WTC11 (cell line): ENCODE measurements at regions of chr2 and their contacts with region 1.

Region 1: GRCh38 chr2:115874427-115874826 is 1432.0 kb downstream of the DPP10 start:
- DNase-seq: no peak
- ATAC-seq: no peak
- H3K4me3 Mint-ChIP-seq: no peak overlapping the region
- H3K27ac Mint-ChIP-seq: no peak overlapping the region
- H3K4me1 Mint-ChIP-seq: no peaks in the 10 kb centered on the region
- H3K27me3 Mint-ChIP-seq: no peaks in the 10 kb centered on the region; the same call in 1 of the 2 replicates
- CTCF ChIP-seq: no peak

Region 2: DNA sequence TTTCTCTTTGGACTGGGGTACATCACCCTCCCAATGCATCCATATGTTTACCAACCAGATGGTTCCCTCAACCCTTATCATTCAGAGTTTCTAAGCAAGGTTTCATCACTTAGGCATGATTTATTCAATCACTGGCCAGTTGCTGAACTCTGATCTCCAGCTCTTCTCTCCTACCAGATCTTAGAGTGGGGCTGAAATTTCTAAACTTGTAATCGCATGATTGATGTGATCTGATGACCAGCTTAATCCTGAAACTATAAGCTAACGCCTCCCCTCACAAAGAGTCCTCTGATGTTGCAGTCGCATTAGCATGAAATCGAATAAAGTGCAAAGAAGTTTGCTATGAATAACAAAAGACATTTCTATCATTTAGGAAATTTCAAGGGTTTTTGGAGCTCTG is 350.0 kb before region 1 on chr2:
- CTCF ChIA-PET with region 1: no interaction called
- POLR2A ChIA-PET with region 1: no interaction called
- DNase-seq: no peak
- ATAC-seq: no peak
- H3K4me3 Mint-ChIP-seq: no peak overlapping the region
- H3K27ac Mint-ChIP-seq: no peak overlapping the region
- H3K4me1 Mint-ChIP-seq: peaks cover 9% of the 10 kb centered on the region
- H3K27me3 Mint-ChIP-seq: no peaks in the 10 kb centered on the region
- CTCF ChIP-seq: no peak

Region 3: DNA sequence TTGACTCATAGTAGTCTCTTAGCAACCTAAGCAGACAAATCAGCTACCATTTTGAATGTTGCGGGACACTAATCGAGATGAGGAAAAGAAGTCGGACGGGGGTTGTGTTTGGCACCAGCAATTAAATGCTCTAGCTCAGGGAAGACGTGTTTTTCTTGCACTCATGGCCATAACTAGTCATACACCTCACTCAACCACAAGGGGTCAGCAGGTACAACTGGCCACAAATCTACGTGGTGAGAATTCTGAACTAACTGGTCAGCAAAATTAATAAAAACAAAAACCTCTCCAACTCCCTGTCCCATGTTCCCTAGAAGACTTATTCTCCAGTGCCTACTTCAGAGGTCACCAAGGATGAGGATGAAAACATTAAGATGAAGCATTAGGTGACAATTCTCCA is 35.8 kb after region 1 on chr2:
- CTCF ChIA-PET with region 1: no interaction called
- POLR2A ChIA-PET with region 1: interaction called, 11 read pairs
- DNase-seq: no peak
- ATAC-seq: peak; percentile 57; the same call in 1 of the 2 replicates
- H3K4me3 Mint-ChIP-seq: no peak overlapping the region
- H3K27ac Mint-ChIP-seq: no peak overlapping the region
- H3K4me1 Mint-ChIP-seq: no peaks in the 10 kb centered on the region
- H3K27me3 Mint-ChIP-seq: no peaks in the 10 kb centered on the region
- CTCF ChIP-seq: peak; percentile 30; the same call in 1 of the 2 replicates